ENCODE measurements at regions of chr1 and their contacts with region 1.

Region 1: GRCh38 chr1:54406339-54407153 is at the start of gene SSBP3:
- DNase-seq: peak; percentile 90
- H3K4me3 ChIP-seq: peak within 1 kb of the TSS; percentile 92
- H3K27ac ChIP-seq: peak within 1 kb of the TSS; percentile 93
- H3K4me1 ChIP-seq: peaks cover 17% of the 10 kb centered on the region
- H3K27me3 ChIP-seq: no peaks in the 10 kb centered on the region
- CTCF ChIP-seq: no peak
- total RNA-seq, gene SSBP3: 63.8 to 76.5 TPM

Region 2: DNA sequence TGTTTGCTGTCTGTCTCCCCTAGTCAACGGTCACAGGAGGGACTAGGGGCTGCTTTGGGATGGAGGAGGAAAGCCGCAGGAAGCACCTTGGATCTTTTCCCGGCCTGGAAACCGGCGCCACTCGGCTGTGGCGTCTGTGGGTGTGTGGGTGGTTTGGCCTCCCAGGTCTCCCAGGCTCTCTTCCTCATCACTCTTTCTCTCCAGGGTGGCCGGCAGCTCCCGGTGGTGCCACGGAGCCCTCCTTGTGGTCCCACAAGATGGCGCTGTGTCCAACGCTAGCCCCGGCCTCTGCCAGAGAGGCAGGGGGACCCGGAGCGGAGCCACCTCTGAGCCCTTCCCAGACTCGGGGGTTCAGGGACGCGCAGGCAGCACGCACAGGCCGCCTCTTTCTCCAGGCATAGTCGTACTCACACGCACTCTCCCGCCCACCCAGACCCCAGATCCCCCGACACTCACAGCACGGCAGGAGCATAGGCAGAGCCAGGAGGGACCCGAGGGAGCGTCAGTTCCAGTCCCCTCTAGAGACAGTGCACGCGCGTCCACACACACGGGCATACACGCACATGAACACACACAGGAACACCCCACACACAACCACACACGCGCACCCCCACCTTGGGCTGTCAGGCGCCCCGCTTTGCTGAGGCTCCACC is 284.9 kb before region 1 on chr1:
- intact Hi-C with region 1: loop called (anchors 5 kb)
- DNase-seq: peak; percentile 89
- H3K4me3 ChIP-seq: peak overlapping the region; percentile 25
- H3K27ac ChIP-seq: no peak overlapping the region
- H3K4me1 ChIP-seq: peaks cover 4% of the 10 kb centered on the region
- H3K27me3 ChIP-seq: no peaks in the 10 kb centered on the region
- CTCF ChIP-seq: peak; percentile 72

Region 3: DNA sequence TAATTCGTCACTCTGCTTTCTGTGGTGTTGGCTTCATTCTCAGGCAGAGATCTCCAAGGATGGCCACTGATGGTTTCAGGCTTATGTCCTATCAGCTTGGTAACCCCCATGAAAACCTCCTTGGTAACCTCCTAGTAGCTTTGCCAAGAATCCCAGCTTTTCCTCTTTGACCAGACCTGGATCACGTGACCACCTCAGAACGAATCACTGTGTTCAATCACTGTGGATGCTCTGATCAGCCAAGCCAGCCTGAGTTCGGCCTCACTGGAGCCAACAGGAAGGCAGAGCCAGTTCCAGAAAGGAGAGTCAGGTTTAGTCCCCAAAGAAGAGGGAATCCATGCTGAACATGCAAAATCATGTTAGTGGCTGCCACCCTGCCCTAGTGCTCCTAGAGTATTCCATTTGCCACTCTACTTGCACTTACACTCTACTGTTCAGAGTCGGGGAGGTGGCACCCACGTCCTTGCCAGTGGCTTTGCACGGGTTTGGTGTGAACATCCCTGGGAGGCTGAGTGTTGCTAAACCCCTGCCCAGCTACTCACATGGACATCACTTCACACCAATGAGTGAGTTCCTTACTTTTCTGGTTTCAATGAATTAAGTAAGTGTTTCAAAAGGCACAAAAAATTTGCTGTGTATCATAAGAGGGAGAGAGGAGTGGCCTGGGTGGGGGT is 33.1 kb after region 1 on chr1:
- intact Hi-C with region 1: no loop called
- DNase-seq: no peak
- H3K4me3 ChIP-seq: no peak overlapping the region
- H3K27ac ChIP-seq: no peak overlapping the region
- H3K4me1 ChIP-seq: no peaks in the 10 kb centered on the region
- H3K27me3 ChIP-seq: no peaks in the 10 kb centered on the region
- CTCF ChIP-seq: no peak